GM12878 (cell line): ENCODE measurements at regions of chr9 and their contacts with region 1.

Region 1: DNA sequence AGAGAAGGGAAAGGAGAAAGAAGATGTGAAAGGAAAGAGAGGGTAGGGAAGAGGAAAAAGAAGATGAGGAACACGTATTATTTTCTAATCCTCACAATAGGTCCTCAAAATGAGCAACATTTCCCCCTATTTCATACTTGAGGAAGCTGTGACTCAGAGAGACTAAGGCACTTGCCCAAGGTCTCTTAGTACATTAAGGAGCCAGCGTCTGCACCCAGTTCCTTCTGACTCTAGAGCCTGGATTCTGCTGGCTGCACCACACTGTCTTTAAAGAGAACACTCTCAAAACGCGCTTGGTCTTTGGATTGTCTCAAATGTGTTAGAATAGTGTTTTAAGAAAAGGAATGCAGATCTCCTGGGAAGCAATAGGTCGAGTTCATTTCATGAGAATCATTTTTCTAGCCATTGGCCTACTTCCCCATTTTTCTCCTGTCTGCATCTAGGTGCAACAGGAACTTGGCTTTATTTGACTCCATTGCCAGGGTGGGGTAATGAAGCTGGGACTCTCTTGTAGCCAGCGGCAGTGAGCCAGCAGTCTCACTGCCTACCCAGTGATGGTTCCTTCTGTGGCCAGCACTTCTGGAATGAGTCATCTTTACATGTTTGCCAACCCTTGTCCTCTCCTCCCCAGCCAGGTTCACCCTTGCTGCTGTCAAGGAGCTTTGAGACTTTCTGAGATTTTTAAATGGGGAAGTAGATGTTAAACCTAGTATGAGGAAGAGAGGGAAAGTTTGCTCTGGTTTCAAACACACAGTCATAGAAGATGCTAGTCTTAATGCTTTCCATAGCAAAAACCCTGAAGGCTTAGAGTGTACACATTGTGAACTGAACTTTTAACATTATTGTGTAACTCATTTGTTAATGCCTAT is 82.7 kb downstream of the DOCK8 start:
- DNase-seq: peak; percentile 91
- ATAC-seq: peak; percentile 99
- H3K4me3 ChIP-seq: peak overlapping the region; percentile 25; the same call in 1 of the 2 replicates
- H3K27ac ChIP-seq: peak overlapping the region; percentile 73
- H3K4me1 ChIP-seq: peaks cover 20% of the 10 kb centered on the region
- H3K27me3 ChIP-seq: no peaks in the 10 kb centered on the region
- CTCF ChIP-seq: no peak
- EP300 ChIP-seq: peak in 1 of 2 experiments; percentile 49; a peak in 1 of 4 replicates
- POLR2A ChIP-seq: no peak
- RAD21 ChIP-seq: no peak

Region 2: DNA sequence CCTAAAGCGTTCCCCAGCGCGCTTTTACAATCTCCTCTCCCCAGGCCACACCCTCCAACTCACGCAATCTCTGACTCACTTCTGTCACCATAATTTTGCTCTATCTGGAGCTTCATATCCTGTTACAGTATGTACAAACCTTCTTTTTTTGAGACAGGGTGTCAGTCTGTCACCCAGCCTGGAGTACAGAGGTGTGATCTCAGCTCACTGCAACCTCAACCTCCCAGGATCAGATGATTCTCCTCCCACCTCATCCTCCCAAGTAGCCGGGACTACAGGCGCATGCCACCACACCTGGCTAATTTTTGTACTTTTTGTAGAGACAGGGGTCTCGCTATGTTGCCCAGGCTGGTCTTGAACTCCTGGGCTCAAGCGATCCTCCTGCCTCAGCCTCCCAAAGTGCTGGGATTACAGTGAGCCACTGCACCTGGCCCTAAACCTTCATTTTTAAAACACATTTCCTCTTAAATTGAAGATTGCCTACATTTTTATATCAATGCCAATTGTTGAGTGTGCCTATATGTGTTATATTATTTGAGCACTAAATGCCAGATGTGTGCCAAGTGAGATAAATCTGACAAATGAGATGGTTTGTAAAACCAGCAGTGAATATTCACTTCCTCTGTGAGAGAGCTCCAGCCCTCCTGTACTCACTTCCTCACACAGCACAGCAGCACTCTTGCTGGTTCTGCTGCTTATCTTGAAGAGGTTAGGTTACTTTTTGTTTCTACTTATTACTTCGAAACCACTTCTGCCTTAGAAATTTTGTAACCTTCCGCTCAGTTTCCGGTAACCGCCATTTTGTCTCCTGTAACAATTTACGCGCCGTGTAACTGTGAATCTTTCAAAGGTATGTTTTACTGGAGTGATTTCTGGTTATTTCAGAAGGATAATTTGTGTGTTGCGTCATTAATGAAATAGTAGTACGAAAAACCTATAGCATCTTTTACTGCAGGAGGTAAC is 24.8 kb before region 1 on chr9:
- CTCF ChIA-PET with region 1: interaction called, 4 read pairs
- POLR2A ChIA-PET with region 1: interaction called, 4 read pairs
- RAD21 ChIA-PET with region 1: no interaction called
- SMC1A ChIA-PET with region 1: interaction called, 10 read pairs
- in situ Hi-C with region 1: no loop called
- intact Hi-C with region 1: no loop called
- DNase-seq: peak; percentile 89
- ATAC-seq: peak; percentile 97
- H3K4me3 ChIP-seq: peak overlapping the region; percentile 70; the same call in 1 of the 2 replicates
- H3K27ac ChIP-seq: peak overlapping the region; percentile 88
- H3K4me1 ChIP-seq: peaks cover 5% of the 10 kb centered on the region
- H3K27me3 ChIP-seq: no peaks in the 10 kb centered on the region
- CTCF ChIP-seq: no peak
- EP300 ChIP-seq: no peak
- POLR2A ChIP-seq: peak; percentile 73
- RAD21 ChIP-seq: 0 out of 2 replicates have a peak, but pooled peaks have one; percentile 19

Region 3: GRCh38 chr9:326667-327066 is 29.3 kb after region 1 on chr9:
- CTCF ChIA-PET with region 1: no interaction called
- POLR2A ChIA-PET with region 1: interaction called, 10 read pairs
- RAD21 ChIA-PET with region 1: no interaction called
- SMC1A ChIA-PET with region 1: no interaction called
- in situ Hi-C with region 1: no loop called
- intact Hi-C with region 1: no loop called
- DNase-seq: no peak
- ATAC-seq: peak; percentile 24; the same call in 1 of the 3 replicates
- H3K4me3 ChIP-seq: no peak overlapping the region
- H3K27ac ChIP-seq: no peak overlapping the region
- H3K4me1 ChIP-seq: no peaks in the 10 kb centered on the region
- H3K27me3 ChIP-seq: no peaks in the 10 kb centered on the region
- CTCF ChIP-seq: no peak
- EP300 ChIP-seq: no peak
- POLR2A ChIP-seq: no peak
- RAD21 ChIP-seq: no peak